BJ (cell line): ENCODE measurements at regions of chr16 and their contacts with region 1.

Region 1: DNA sequence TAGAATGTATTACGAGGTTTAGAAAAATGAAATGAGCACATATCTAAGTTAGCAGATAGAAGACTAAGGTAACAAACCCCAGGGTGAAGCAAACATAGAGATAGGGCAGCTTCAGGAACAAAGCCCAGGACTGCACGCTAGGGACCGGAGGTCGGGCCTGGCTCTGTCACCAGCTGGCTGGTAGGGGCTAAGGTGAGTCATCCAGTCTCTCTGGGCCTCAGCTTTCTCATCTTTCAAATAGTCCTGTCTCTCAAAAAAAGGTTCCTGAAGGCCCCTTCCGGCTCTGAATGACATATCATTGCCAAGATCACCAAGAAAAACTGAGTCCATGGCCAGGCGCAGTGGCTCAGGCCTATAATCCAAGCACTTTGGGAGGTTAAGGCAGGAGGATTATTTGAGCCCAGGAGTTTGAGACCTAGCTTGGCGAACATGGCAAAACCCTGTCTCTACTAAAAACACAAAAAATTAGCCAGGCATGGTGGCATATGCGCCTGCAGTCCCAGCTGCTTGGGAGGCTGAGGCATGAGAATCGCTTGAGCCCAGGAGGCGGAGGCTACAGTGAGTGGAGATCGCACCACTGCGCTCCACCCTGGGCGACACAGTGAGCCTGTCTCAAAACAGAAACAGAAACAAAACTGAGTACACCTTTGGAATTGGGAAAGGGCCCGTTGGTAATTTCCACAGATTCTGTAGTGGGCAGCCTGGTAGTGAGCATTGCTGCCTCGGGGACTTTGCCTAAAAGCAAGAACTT is 26.0 kb downstream of the PKD1L3 start:
- DNase-seq: no peak
- H3K4me3 ChIP-seq: no peak overlapping the region
- H3K27me3 ChIP-seq: no peaks in the 10 kb centered on the region
- CTCF ChIP-seq: no peak

Region 2: GRCh38 chr16:71961066-71962039 is 12.9 kb before region 1 on chr16:
- CTCF ChIA-PET with region 1: interaction called, 25 read pairs
- POLR2A ChIA-PET with region 1: no interaction called
- DNase-seq: peak; percentile 36
- H3K4me3 ChIP-seq: no peak overlapping the region
- H3K27me3 ChIP-seq: no peaks in the 10 kb centered on the region
- CTCF ChIP-seq: peak; percentile 80